MCF 10A (cell line): ENCODE measurements at regions of chr5 and their contacts with region 1.

Region 1: GRCh38 chr5:102583276-102584124 is 84.7 kb upstream of the SLCO6A1 start:
- DNase-seq: peak; percentile 35
- H3K4me3 Mint-ChIP-seq: no peak overlapping the region
- H3K27ac Mint-ChIP-seq: no peak overlapping the region
- H3K4me1 Mint-ChIP-seq: no peaks in the 10 kb centered on the region
- H3K27me3 Mint-ChIP-seq: no peaks in the 10 kb centered on the region
- CTCF ChIP-seq: peak; percentile 50

Region 2: DNA sequence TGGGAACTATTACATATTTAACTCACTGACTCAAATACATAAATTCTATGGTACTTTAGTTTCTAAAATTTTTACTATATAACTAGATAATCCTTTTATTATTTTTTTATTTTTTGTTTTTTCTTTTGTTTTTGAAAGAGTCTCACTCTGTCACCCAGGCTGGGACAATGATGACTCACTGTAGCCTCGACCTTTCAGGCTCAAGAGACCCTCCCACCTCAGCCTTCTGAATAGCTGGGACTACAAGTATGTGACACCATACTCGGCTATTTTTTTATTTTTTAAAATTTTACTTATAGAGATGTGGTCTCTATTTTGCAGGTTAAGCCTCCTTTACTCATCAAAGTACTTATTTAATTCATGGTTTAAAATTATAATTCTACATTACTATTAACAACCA is 195.3 kb before region 1 on chr5:
- CTCF ChIA-PET with region 1: no interaction called
- POLR2A ChIA-PET with region 1: no interaction called
- intact Hi-C with region 1: no loop called
- DNase-seq: no peak
- H3K4me3 Mint-ChIP-seq: no peak overlapping the region
- H3K27ac Mint-ChIP-seq: no peak overlapping the region
- H3K4me1 Mint-ChIP-seq: no peaks in the 10 kb centered on the region
- H3K27me3 Mint-ChIP-seq: peaks cover 21% of the 10 kb centered on the region
- CTCF ChIP-seq: no peak

Region 3: DNA sequence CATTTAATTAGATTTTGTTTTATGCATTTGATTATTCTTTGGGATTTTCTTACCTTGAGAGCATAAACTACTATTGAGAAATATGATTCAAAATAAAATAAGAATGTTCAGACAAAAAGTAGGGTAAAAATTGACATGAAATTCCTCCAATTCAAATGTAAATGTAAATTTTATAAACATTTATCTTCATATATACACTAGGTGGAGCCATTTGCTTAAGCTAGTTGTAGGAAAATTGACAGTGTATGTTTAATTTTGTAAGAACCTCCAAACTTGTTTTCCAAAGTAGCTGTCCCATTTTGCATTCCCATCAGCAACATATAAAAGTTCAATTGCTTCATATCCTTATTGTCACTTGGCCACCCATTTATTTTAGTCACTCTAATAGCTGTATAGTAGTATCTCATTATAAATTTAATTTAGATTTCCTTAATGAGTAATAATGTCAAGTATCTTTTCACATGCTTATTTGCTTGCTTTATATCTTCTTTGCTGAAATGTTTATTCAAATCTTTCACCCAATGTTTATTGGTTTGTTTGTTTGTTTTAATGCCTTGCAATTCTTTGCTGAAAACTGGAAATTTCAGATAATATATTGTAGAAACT is 47.1 kb before region 1 on chr5:
- CTCF ChIA-PET with region 1: interaction called, 11 read pairs
- POLR2A ChIA-PET with region 1: no interaction called
- intact Hi-C with region 1: no loop called
- DNase-seq: peak; percentile 17
- H3K4me3 Mint-ChIP-seq: no peak overlapping the region
- H3K27ac Mint-ChIP-seq: no peak overlapping the region
- H3K4me1 Mint-ChIP-seq: no peaks in the 10 kb centered on the region
- H3K27me3 Mint-ChIP-seq: peaks cover 11% of the 10 kb centered on the region
- CTCF ChIP-seq: peak; percentile 54

Region 4: DNA sequence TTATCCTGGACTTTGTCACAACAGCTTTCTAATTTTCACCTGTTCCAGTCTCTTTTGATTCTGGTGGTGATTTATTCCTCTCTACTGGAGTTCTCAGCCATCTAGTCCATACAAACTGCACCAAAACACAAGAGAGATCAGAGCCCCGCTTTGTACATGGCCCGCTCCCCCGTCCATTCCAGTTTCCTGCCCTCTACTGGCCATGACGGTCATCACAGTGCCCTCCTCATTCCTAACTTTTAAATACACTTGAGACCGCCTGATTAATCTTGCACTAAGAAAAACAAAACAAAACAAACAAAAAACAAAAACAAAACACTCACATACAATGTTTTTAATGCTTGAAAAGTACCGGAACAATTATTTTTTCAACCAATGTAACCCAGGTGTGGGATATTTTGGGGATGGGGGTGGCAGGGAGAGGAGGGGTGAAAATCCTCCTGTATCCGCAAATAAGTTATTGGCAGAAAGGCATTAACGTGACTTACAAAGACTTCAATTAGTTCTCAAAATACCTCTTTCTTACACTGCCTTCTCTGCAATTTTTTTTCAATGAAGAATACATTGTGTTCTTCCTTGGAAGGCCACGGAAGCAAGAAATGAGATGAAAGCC is 86.8 kb after region 1 on chr5:
- CTCF ChIA-PET with region 1: interaction called, 4 read pairs
- POLR2A ChIA-PET with region 1: no interaction called
- intact Hi-C with region 1: loop called (anchors 1 kb)
- DNase-seq: peak; percentile 51
- H3K4me3 Mint-ChIP-seq: no peak overlapping the region
- H3K27ac Mint-ChIP-seq: no peak overlapping the region
- H3K4me1 Mint-ChIP-seq: no peaks in the 10 kb centered on the region
- H3K27me3 Mint-ChIP-seq: no peaks in the 10 kb centered on the region
- CTCF ChIP-seq: peak; percentile 53

Region 5: DNA sequence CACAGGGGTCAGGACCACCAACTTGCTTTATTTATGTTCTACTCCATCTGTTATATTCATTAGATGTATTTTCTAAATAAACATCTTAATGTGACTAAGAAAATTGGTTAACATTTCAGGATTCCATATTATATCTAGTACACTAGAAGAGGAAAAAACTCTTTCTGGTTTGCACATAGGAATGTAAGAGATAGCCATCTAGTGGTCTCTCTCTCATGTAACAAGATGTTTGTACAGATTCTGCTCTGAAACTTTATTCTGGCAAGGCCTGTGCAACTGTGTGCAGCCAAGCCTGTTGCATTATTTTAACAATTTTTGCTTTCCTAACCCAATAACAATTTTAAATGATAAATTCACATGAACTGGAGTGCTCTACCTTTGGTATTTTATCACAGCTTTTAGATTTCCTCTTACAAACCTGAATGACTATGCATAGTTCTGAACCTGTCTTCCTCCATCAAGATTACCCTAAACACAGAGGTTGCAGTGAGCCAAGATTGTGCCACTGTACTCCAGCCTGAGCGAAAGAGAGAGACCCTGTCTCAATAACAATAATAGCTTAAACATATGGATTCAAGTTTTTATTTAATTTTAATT is 388.3 kb after region 1 on chr5:
- CTCF ChIA-PET with region 1: interaction called, 5 read pairs
- POLR2A ChIA-PET with region 1: no interaction called
- intact Hi-C with region 1: loop called (anchors 10 kb)
- DNase-seq: peak; percentile 11
- H3K4me3 Mint-ChIP-seq: no peak overlapping the region
- H3K27ac Mint-ChIP-seq: no peak overlapping the region
- H3K4me1 Mint-ChIP-seq: no peaks in the 10 kb centered on the region
- H3K27me3 Mint-ChIP-seq: no peaks in the 10 kb centered on the region
- CTCF ChIP-seq: peak; percentile 32

Region 6: DNA sequence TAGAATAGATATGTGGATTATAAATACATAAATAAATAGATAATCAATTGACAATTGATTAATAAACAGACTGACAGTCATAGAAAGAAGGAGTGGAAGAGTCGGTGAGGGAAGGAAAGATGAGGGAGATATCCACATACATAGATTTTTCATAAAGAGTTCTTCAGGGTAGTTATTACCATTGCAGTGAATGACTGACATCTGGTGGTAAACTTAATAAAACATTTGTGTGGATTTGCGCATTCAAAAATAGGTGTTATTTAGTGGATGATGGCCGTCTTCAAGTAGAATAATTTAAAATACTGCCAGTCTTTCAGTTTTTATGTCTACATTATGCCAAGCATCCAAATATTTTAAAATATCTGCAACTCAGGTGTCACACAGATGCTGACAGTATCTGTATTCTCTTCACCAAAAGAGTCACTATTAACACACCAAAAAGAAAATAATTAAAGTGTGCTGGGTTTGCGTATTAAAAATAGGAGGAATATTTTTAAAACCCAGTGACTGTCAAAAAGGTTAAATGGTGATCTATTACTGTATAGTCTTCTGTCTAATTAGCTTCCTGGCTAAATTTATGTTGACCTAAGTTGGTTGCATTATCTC is 457.7 kb after region 1 on chr5:
- CTCF ChIA-PET with region 1: interaction called, 16 read pairs
- POLR2A ChIA-PET with region 1: no interaction called
- intact Hi-C with region 1: loop called (anchors 1 kb)
- DNase-seq: peak; percentile 59
- H3K4me3 Mint-ChIP-seq: no peak overlapping the region
- H3K27ac Mint-ChIP-seq: no peak overlapping the region
- H3K4me1 Mint-ChIP-seq: no peaks in the 10 kb centered on the region
- H3K27me3 Mint-ChIP-seq: no peaks in the 10 kb centered on the region
- CTCF ChIP-seq: peak; percentile 53

Region 7: DNA sequence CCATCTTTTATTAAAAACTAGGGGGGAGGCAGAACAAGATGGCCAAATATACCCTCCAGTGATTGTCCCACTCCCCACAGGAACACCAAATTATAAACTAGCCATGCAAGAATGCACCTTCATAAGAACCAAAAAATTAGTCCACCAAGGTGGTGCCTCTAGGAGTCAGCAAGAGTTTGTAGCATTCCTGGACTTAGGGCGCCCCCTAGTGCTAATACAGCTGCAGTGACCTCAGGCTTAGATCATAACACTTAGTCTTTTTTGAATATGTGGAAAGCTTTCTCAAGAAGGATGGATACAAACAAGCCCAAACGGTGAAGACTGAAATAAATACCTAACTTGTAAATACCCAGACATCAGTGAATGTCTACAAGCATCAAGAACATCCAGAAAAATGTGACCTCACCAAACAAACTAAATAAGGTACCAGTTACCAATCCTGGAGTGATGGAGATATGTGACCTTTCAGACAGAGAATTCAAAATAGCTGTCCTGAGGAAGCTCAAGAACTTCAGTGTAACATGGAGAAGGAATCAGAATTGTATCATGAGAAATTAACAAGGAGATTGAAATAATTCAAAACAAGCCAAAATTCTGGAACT is 555.9 kb after region 1 on chr5:
- CTCF ChIA-PET with region 1: interaction called, 14 read pairs
- POLR2A ChIA-PET with region 1: interaction called, 3 read pairs
- intact Hi-C with region 1: loop called (anchors 1 kb)
- DNase-seq: peak; percentile 87
- H3K4me3 Mint-ChIP-seq: no peak overlapping the region
- H3K27ac Mint-ChIP-seq: no peak overlapping the region
- H3K4me1 Mint-ChIP-seq: no peaks in the 10 kb centered on the region
- H3K27me3 Mint-ChIP-seq: no peaks in the 10 kb centered on the region
- CTCF ChIP-seq: peak; percentile 95

Region 8: GRCh38 chr5:103224118-103224893 is 640.8 kb after region 1 on chr5:
- CTCF ChIA-PET with region 1: interaction called, 3 read pairs
- POLR2A ChIA-PET with region 1: no interaction called
- intact Hi-C with region 1: loop called (anchors 1 kb)
- DNase-seq: peak; percentile 74
- H3K4me3 Mint-ChIP-seq: no peak overlapping the region
- H3K27ac Mint-ChIP-seq: no peak overlapping the region
- H3K4me1 Mint-ChIP-seq: no peaks in the 10 kb centered on the region
- H3K27me3 Mint-ChIP-seq: no peaks in the 10 kb centered on the region
- CTCF ChIP-seq: peak; percentile 65